ENCODE measurements at regions of chr10 and their contacts with region 1.

Region 1: DNA sequence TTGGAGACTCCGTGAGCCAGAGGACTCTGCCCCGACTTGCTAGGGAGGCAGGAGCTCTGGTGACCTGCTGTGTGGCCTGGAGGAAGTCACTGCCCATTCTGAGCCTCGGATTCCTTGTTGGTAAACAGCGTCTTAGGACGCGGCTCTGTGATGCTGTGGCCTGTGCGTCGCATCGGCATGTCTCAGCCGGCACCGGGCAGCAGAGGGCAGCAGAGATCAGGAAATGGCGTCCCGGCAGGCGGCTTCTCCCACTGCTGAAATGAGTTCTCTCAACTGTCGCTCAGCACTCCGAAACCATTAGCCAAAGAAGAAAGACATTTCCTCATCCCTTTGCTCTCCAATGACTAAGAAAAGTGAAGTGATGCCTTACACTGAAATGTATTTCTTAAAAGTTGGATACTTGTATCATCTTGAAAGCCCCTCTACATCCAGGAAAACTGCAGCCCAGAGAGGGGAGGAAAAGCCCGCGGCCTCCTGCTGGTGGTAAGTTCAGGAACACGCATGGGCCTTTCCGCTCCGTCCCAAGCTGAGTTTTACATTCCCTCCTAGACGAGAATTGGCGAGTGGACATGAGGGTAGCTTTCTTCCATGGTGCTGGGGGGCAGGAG is 91.7 kb downstream of the WDR11 start:
- DNase-seq: peak; percentile 79 to 98 (median 90)

Region 2: DNA sequence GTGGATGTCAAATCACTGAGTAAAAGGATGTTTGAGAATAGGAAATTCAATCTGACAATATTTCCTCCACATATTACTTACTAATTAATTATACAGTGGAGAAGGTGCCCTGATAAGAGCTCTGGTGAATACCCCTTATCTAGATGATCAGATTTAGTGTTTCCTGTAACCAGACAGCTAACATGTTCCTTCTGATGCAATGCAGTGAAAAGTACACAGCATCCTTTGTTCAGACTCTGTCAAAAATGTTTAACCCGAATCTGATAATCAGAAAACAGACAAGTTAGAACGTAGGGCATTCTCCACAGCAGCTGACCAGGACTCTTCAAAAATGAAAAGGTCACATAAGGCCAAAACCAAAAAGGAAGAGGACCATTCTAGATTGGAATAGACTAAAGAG is 45.6 kb before region 1 on chr10:
- intact Hi-C with region 1: no loop called
- DNase-seq: no peak

Region 3: GRCh38 chr10:121131426-121132265 is 188.7 kb after region 1 on chr10:
- intact Hi-C with region 1: loop called (anchors 10 kb)
- DNase-seq: peak in 4 of 10 donors; percentile 46 to 85 (median 74)

Region 4: GRCh38 chr10:121598207-121598862 is 655.4 kb after region 1 on chr10 and contains the start of gene FGFR2:
- intact Hi-C with region 1: loop called (anchors 2 kb)
- DNase-seq: peak; percentile 65 to 96 (median 76)

Region 5: GRCh38 chr10:121734589-121735045 is 791.7 kb after region 1 on chr10:
- intact Hi-C with region 1: loop called (anchors 2 kb)
- DNase-seq: peak in 5 of 10 donors; percentile 14 to 85 (median 28)

Region 6: GRCh38 chr10:121886997-121887622 is 944.2 kb after region 1 on chr10:
- intact Hi-C with region 1: loop called (anchors 2 kb)
- DNase-seq: peak; percentile 25 to 95 (median 71)

Region 7: GRCh38 chr10:121900443-121901174 is 957.7 kb after region 1 on chr10:
- intact Hi-C with region 1: loop called (anchors 2 kb)
- DNase-seq: no peak

Measured in posterior cingulate gyrus (tissue), 11 donors.